ENCODE measurements at regions of chr22 and their contacts with region 1.

Region 1: DNA sequence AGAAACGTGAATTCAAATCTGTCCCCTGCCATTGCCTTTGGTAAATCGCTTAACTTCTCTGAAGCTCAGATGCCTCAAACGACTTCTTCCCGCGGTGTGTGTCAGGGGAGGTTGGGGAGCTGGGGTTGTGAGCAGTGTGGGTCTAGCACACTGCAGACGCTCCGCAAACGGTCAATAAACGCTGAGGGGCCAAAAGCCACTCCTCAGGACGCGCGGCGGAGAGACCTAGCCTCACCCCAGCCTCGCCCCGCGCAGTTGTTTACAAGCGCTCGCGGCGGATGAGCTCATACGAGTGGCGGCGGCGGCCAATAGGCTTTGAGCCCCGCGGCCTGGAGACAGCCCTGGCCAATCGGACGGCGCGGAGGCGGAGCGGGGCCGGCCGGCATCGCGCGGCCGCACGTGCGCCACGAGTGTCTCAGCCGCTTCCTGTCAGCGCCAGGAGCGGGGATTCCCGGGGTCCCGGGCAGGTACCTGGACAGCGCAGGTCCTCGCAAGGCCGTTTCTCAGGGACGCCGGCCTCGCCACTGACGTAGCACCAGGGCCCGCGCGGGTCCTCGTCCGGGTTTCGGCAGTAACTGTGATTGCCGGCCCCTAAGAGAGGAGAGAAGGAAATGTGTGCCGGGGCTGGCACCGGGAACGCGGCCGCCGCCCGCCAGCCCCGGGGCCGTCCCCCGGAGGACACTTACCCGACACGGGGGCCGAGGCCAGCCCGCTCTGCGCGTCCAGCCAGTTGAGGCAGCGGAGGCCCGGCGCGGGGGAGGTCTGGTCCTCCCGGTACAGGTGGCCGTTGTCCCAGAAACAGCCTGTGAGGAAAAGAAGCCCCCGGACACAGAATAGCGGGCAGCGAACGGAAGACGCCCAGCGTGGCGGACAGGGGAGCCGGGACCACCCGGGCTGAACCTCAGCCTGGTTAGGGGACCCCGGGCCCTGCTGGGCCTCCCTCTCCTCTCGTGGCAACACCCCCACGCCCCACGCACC is 1.5 kb downstream of the PIK3IP1 start:
- DNase-seq: peak; percentile 81 to 94 (median 91)
- H3K4me3 ChIP-seq: peak overlapping the region; percentile 75 to 97 (median 91)
- H3K27ac ChIP-seq: peak overlapping the region; percentile 61 to 84
- H3K4me1 ChIP-seq: peaks cover 12 to 93% (median 70%) of the 10 kb centered on the region in 4 experiments
- H3K27me3 ChIP-seq: no peaks in the 10 kb centered on the region

Region 2: GRCh38 chr22:31302006-31302405 is 11.2 kb after region 1 on chr22:
- CTCF ChIA-PET with region 1: interaction called, 128 read pairs
- POLR2A ChIA-PET with region 1: no interaction called
- DNase-seq: no peak
- H3K4me3 ChIP-seq: no peak overlapping the region
- H3K27ac ChIP-seq: no peak overlapping the region
- H3K4me1 ChIP-seq: no peaks in the 10 kb centered on the region
- H3K27me3 ChIP-seq: no peaks in the 10 kb centered on the region

Region 3: GRCh38 chr22:31313366-31314147 is 22.8 kb after region 1 on chr22:
- CTCF ChIA-PET with region 1: interaction called, 128 read pairs
- POLR2A ChIA-PET with region 1: interaction called, 6 read pairs
- DNase-seq: peak in 2 of 3 donors; percentile 41 to 59
- H3K4me3 ChIP-seq: no peak overlapping the region
- H3K27ac ChIP-seq: no peak overlapping the region
- H3K4me1 ChIP-seq: no peaks in the 10 kb centered on the region
- H3K27me3 ChIP-seq: no peaks in the 10 kb centered on the region